Right ventricle myocardium inferior (tissue), 1 donor: ENCODE measurements at regions of chr20 and their contacts with region 1.

Region 1: DNA sequence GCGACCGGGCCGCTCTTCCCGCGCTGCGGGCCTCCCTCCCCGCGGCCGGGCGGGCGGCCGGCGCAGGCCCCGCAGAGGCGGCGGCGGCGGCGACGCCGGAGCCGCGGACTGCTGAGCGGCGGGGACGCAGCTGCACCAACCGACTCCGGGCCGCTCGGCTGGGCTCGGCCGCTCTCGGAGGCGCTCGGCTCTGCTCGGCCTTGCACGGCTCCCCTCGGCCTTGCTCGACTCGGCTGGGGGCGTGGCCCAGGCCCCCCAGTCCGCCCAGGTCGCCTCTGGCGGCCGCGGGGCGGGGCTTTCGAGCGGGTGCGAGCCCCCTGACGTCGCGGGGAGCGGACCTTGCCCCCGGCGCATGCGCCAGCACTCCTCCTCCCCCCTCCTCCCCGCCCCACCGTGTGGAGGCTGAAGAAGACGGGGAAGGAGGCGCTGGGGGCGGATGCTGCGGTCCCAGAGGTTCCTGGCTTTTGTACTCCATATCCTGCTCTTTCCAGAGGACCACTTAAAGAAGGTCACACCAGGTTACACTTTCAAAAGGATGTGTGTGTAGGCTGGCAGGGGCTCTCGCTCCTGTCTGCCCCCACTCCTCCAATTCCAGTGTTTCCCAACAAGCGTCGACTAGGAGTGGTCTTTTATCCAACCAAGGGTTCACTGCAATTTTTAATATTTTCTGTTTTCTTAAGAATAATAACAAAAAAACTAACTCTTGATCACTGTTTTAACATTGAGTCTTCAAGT is at the start of gene ZHX3:
- DNase-seq: peak; percentile 96
- ATAC-seq: peak; percentile 99
- total RNA-seq, gene ZHX3: 34.5 TPM

Region 2: GRCh38 chr20:41249406-41250281 is 68.1 kb before region 1 on chr20:
- intact Hi-C with region 1: loop called (anchors 2 kb)
- DNase-seq: peak; percentile 75
- ATAC-seq: peak; percentile 86

Region 3: DNA sequence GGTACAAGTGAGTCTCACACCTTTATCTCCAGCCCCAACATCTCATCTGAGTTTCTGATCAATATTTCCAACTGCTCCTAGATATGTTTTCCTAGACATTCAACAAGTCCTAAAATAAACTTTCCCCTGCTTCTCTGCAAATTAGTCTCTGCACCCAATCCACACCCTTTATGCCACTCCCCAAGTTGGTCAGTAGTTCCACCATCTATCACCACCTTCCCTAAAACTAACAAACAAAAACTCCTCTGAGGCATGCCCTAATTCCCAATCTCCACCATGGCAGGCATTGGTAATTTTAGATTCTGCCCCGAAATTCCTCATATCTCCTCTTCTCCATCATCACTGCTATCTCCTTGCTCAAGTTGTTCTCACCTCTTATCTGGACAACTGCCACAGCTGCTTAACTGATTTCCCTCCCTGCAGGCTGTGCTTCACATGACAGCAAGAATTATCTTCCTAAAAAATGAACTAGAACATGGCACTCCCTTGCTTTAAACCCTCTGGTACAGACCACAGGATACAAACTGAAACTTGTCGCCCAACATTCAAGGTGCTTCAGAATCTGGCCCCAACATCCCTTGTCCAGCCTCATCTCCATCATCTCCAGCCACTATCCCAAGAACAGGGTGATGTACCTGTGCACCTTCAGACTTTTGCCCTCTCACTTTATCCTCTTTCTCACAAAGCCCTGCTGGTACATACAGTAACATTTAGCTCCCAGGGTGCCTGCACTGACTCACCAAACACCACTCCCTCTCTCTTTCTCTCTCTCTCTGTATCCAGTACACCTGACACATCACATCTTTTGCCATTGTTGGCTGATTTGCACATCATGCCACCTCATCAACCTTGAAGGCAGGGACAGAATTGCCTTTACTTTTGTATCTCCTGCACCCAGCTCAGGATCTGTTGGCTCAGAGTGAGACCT is 55.6 kb before region 1 on chr20:
- intact Hi-C with region 1: no loop called
- DNase-seq: no peak
- ATAC-seq: peak; percentile 13

Region 4: GRCh38 chr20:41272339-41272738 is 45.4 kb before region 1 on chr20:
- intact Hi-C with region 1: loop called (anchors 2 kb)
- DNase-seq: no peak
- ATAC-seq: no peak

Region 5: GRCh38 chr20:41392871-41393704 is 75.4 kb after region 1 on chr20:
- intact Hi-C with region 1: no loop called
- DNase-seq: peak; percentile 86
- ATAC-seq: peak; percentile 91

Region 6: GRCh38 chr20:41453010-41453950 is 135.6 kb after region 1 on chr20:
- intact Hi-C with region 1: no loop called
- DNase-seq: no peak
- ATAC-seq: no peak